CD8-positive, alpha-beta T cell (primary cell): ENCODE measurements at regions of chr18 and their contacts with region 1.

Region 1: GRCh38 chr18:59899298-59900221 is at the start of gene PMAIP1:
- DNase-seq: peak; percentile 68 to 91 (median 78)
- ATAC-seq: peak; percentile 73
- H3K4me3 ChIP-seq: peak within 1 kb of the TSS; percentile 82 to 94
- H3K4me3 Mint-ChIP-seq: peak within 1 kb of the TSS; percentile 95
- H3K27ac ChIP-seq: peak within 1 kb of the TSS; percentile 67 to 93
- H3K27ac Mint-ChIP-seq: peak within 1 kb of the TSS; percentile 94
- H3K4me1 ChIP-seq: peaks cover 18% of the 10 kb centered on the region
- H3K4me1 Mint-ChIP-seq: peaks cover 37% of the 10 kb centered on the region
- H3K27me3 ChIP-seq: no peaks in the 10 kb centered on the region
- H3K27me3 Mint-ChIP-seq: no peaks in the 10 kb centered on the region
- CTCF ChIP-seq: no peak
- total RNA-seq, gene PMAIP1: 96.2 to 101 TPM

Region 2: DNA sequence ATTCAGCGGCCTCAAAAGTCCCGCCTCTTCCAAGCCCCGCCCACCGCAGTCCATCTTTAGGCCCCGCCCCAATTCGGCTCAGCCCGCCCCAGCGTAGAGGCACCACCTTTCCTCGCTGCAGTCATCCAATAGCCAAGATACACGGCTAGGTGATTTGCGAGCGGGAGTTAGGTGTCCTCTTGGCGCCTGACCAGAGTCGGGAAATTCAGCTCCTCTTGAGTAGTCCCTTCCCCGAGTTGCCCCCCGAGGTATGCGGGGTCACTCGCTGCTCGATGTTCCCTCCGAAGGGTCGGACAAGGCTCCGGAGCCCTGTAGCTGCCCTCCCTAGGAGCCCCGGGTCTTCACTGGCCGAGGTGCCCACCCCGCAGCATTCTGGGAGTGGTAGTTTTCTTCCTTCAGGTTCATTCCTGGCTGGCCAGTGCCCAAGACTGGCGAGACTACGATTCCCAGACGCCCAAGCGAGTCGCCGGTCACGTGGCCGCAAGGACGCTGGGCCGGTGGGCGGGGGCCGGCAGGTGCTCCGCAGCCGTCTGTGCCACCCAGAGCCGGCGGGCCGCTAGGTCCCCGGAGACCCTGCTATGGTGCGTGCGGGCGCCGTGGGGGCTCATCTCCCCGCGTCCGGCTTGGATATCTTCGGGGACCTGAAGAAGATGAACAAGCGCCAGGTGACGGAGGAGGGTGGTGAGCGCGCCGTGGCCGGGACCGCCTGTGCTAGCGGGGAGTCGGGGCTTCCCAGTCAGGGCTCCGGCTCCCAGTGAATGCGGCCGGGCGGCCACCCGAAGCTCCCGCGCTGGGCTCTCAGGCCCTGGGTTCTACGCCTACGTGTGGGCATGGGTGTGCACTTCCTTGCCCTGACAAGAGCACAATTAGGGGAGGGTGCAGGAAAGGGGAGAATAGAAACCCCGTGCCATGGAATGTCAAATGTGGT is 759.9 kb before region 1 on chr18 and contains the start of gene SEC11C:
- CTCF ChIA-PET with region 1: no interaction called
- POLR2A ChIA-PET with region 1: no interaction called
- intact Hi-C with region 1: loop called (anchors 10 kb)
- DNase-seq: peak; percentile 91 to 98 (median 96)
- ATAC-seq: peak; percentile 90
- H3K4me3 ChIP-seq: peak within 1 kb of the TSS; percentile 92 to 99
- H3K4me3 Mint-ChIP-seq: peak within 1 kb of the TSS; percentile 94
- H3K27ac ChIP-seq: peak within 1 kb of the TSS; percentile 98 to 100
- H3K27ac Mint-ChIP-seq: peak within 1 kb of the TSS; percentile 100
- H3K4me1 ChIP-seq: peaks cover 19% of the 10 kb centered on the region
- H3K4me1 Mint-ChIP-seq: peaks cover 42% of the 10 kb centered on the region
- H3K27me3 ChIP-seq: no peaks in the 10 kb centered on the region
- H3K27me3 Mint-ChIP-seq: peaks cover 9% of the 10 kb centered on the region
- CTCF ChIP-seq: no peak
- total RNA-seq, gene SEC11C: 33.8 to 38.5 TPM

Region 3: DNA sequence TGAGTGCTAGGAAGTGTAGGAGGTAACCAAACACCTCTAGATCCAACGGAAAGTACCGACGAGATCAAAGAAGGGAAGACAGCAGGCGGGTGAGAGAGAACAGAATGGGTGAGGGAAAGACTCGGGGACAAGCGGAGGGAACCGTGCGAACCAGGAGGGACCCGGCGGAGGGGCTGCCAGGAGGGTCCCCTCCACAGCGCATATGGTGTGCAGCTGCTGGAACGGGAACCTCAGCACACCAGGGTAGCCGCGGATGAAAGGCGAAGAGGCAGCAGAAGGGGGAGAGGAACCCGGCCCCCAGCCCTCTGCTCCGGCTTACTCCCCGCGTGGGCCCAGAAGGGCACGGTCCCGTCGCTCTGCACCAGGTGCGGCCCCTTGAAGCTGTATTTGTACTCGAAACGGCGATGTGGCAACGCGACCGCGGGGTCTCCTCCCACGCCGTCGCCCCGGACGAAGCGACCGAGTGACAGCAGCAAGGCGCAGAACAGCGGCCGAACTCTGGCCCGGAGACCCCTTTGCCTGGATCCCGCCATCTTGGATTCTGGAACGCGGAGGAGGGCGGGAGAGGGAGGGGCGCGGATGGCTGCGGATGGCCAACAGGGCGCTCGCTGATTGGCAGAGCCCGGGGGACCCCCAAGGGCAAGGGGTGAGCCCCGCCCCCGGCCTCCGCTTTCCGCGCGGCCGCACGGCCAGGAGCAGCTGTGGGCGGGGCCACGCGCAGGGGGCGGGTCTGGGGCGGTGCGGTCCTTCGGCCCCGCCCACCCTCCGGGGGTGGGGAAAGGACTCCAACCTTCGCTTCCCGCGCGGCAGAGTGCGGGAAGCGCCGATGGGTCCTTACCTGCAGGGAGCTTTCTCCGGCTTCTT is 540.6 kb before region 1 on chr18 and contains the start of gene LMAN1:
- CTCF ChIA-PET with region 1: no interaction called
- POLR2A ChIA-PET with region 1: no interaction called
- intact Hi-C with region 1: loop called in 1 of 2 experiments (anchors 5 kb)
- DNase-seq: peak; percentile 77 to 96 (median 92)
- ATAC-seq: peak; percentile 92
- H3K4me3 ChIP-seq: peak within 1 kb of the TSS; percentile 67 to 97
- H3K4me3 Mint-ChIP-seq: peak within 1 kb of the TSS; percentile 97
- H3K27ac ChIP-seq: peak within 1 kb of the TSS; percentile 51 to 86
- H3K27ac Mint-ChIP-seq: peak within 1 kb of the TSS; percentile 92
- H3K4me1 ChIP-seq: peaks cover 21% of the 10 kb centered on the region
- H3K4me1 Mint-ChIP-seq: peaks cover 39% of the 10 kb centered on the region
- H3K27me3 ChIP-seq: no peaks in the 10 kb centered on the region
- H3K27me3 Mint-ChIP-seq: no peaks in the 10 kb centered on the region
- CTCF ChIP-seq: no peak
- total RNA-seq, gene LMAN1: 39.6 to 44.6 TPM

Region 4: DNA sequence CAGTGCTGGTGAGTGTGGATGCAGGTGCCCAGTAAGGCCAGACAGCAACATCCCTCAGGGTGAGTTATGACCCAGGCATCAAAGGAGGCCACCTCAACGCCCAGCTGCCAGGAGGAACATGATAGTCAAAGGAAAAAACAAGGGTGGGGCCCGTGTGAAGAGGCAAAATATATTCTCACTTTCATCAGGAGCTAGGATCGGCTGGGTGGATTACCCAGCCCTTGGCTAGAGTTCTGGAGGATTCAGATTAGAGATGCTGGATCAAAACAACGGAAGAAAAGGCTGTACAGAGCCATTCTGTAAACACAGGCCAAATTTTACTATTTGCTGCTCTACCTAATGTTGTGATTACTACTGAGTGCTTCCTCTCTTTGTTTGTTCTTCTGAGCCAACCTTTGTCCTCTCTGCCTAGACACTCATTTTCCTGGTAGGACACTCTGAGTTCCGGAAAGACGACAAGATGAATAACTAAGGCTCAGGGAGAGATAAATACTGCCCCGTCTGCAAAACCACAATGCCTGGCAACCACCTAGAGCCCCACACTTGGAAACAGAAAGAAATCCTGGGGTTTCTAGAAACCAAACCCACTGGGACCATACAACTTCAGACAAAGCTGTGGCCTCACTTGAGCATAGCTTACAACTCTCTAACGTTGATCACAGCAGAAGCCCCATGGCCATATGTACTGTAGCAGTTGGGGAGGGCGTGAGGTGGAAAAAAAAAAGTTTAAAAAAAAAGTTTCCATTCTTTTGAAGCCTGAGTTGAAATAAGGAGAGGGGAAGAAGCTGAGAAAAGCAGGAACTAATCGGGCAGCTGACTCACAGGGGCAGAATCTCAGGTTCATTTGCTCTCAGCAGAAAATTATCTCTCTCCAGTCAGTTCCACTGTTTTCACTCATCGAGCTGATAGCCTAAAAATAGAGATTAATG is 17.6 kb before region 1 on chr18:
- CTCF ChIA-PET with region 1: interaction called, 4 read pairs
- POLR2A ChIA-PET with region 1: no interaction called
- intact Hi-C with region 1: loop called in 1 of 2 experiments (anchors 2 kb)
- DNase-seq: peak in 1 of 9 experiments; percentile 32
- ATAC-seq: no peak
- H3K4me3 ChIP-seq: no peak overlapping the region
- H3K4me3 Mint-ChIP-seq: no peak overlapping the region
- H3K27ac ChIP-seq: no peak overlapping the region
- H3K27ac Mint-ChIP-seq: no peak overlapping the region
- H3K4me1 ChIP-seq: peaks cover 11% of the 10 kb centered on the region
- H3K4me1 Mint-ChIP-seq: peaks cover 27% of the 10 kb centered on the region
- H3K27me3 ChIP-seq: no peaks in the 10 kb centered on the region
- H3K27me3 Mint-ChIP-seq: no peaks in the 10 kb centered on the region
- CTCF ChIP-seq: no peak